Activated T-helper 1 cell treated with anti-CD3 and anti-CD28 coated beads, Interleukin-12 subunit alpha, Interleukin-12 subunit beta, Interleukin-2, Interleukin-4 antibody, amounts not matched to agents 30 ng/mL and 10 ng/mL and 1 ng/mL, durations not matched to agents 14 hours and 24 hours and 36 hours (primary cell): ENCODE measurements at regions of chr15 and their contacts with region 1.

Region 1: DNA sequence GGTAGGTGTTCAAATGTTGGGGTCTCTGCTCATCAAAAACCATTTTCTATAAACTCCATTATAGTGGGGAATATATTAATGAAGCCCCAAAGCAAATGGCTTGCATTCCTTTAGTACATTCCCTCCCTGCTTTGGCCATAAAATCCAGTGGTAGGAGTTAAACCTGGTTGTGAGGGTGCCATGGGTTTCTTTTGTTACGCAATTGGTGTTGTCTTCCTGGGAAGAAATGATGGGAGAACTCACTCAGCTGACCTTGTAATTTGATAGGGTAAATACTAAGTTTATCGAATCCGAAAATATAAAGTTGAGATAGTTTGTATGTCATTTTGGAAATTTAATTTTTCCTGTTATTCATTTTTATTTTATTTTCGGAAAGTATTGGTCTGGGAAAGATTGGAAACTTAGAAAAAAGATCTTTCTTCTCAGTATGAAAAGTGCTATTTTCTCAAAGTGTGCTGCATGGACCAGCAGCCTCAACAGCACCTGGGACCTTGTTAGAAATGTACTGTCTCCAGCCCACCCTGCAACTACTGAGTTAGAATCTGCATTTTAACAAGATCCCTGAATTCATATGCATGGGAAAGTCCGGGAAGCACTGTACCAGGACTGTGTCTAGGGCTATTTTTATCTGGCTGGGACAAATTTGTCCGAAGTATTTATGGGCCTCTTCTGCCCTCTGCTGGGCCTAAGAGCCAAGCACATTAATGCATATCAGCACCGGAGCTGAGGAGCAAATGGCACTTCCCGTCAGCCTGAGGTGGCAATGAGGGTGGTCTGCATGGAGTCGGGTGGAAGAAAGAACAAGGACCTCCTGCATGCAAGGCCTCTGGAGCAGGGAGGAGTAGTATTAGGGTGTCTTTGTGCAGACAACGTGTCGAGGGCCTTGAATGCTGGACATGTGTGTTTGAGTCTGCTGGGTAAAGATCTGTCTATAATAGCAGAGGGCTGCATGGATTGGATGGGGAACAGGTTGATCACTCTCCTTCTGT is 54.7 kb downstream of the FAM81A start:
- DNase-seq: peak; percentile 25
- H3K4me3 Mint-ChIP-seq: no peak overlapping the region
- H3K27ac Mint-ChIP-seq: no peak overlapping the region
- H3K4me1 Mint-ChIP-seq: no peaks in the 10 kb centered on the region
- H3K27me3 Mint-ChIP-seq: peaks cover 32% of the 10 kb centered on the region

Region 2: GRCh38 chr15:58957101-58957973 is 535.3 kb before region 1 on chr15:
- intact Hi-C with region 1: loop called (anchors 1 kb)
- DNase-seq: peak; percentile 45
- H3K4me3 Mint-ChIP-seq: no peak overlapping the region
- H3K27ac Mint-ChIP-seq: no peak overlapping the region
- H3K4me1 Mint-ChIP-seq: peaks cover 17% of the 10 kb centered on the region
- H3K27me3 Mint-ChIP-seq: peaks cover 11% of the 10 kb centered on the region

Region 3: GRCh38 chr15:59174835-59175831 is 317.6 kb before region 1 on chr15:
- intact Hi-C with region 1: loop called (anchors 1 kb)
- DNase-seq: peak; percentile 12
- H3K4me3 Mint-ChIP-seq: no peak overlapping the region
- H3K27ac Mint-ChIP-seq: peak overlapping the region; percentile 41
- H3K4me1 Mint-ChIP-seq: peaks cover 23% of the 10 kb centered on the region
- H3K27me3 Mint-ChIP-seq: no peaks in the 10 kb centered on the region

Region 4: DNA sequence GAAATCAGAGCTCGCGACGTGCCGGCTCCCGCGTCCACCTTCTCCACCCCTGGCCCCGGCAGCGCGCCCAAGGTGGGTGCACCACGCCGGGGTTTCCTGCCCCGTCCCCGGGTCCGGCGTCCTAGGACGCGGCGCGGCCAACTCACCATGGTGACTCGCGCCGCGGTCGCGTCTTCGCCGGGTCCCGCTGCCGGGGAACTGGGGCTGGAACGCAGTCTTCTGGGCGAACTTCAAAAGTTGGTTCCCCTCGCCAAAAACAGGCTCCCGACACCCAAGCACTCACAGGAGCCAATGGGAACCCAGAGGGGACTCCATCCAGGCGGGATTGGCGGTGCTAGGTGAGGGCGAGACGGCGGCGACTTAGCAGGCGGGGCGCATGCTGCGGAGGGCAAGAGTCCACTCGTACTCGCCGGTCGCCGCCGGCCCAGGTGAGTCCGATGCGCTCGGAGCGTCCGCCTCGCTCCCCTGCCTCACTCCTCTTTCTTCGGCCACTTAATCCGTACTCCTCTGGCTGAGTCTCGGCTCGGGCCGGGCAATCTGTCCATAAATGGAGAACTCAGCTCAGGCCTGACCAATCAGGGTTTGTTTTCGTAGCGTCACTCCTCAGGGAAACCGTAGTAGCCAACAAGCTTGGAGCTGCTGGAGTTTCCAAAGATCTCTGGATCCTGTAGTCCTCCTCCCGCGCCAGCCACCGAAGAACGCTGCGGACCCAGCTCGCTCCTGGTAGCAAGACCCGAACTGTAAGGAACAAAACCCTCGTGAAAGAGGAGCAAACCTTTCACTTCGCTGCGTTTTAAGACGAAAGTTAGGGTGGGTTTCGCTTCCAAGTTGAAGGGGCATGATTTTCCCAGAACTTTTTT is 120.1 kb before region 1 on chr15 and contains the start of gene MYO1E:
- intact Hi-C with region 1: loop called (anchors 5 kb)
- DNase-seq: peak; percentile 34
- H3K4me3 Mint-ChIP-seq: peak within 1 kb of the TSS; percentile 96
- H3K27ac Mint-ChIP-seq: peak within 1 kb of the TSS; percentile 79
- H3K4me1 Mint-ChIP-seq: peaks cover 42% of the 10 kb centered on the region
- H3K27me3 Mint-ChIP-seq: peaks cover 31% of the 10 kb centered on the region
- total RNA-seq, gene MYO1E: 33.3 and 33.6 TPM in 2 replicates

Region 5: GRCh38 chr15:59473226-59473625 is 19.5 kb before region 1 on chr15:
- intact Hi-C with region 1: no loop called
- DNase-seq: no peak
- H3K4me3 Mint-ChIP-seq: no peak overlapping the region
- H3K27ac Mint-ChIP-seq: no peak overlapping the region
- H3K4me1 Mint-ChIP-seq: no peaks in the 10 kb centered on the region
- H3K27me3 Mint-ChIP-seq: peaks cover 43% of the 10 kb centered on the region

Region 6: DNA sequence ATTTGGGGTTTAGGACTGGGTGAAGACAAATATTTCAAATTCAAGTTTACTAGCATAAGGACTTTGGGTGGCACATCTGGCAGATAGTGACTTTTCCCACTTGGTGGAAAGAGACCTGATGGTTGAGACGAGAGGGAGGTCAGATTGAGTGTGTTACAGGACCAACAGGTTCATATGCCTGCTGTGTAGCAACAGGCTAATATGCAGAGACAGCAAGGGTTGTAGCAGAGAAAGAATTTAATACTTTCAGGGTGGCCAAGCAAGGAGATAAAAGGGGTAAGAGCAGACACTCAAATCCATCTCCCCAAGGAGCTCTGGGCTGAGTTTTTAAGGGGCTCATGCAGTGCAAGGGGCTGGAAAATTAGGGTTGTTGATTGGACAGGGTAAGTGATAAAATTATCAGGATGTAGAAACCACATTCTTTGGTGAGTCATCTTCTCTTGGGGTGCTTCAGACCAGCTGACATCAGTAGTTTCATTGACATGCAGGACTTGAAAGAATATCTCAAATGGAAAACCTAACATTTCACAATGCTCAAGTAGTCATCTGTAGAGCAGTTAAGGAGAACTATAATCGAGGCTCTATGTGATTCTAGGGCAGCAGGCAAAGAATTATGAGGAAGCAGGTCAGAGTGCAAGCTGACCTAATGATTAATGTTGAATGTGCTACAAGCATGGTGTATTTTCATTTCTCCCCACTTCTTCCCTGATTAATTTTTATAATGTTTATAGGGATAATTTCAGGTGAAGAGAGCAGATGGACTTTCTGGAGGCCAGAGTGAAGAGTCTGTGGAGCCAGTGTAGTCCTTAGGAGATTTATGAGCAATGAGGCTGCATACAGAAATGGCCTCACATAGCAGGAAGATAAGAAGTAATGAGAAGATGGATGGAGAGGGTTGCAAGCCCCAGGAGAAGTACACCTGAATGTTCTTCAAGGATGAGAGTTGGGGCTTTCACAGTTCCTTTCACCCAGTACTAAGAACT is 525.1 kb after region 1 on chr15:
- intact Hi-C with region 1: no loop called
- DNase-seq: no peak
- H3K4me3 Mint-ChIP-seq: peak overlapping the region; percentile 4
- H3K27ac Mint-ChIP-seq: peak overlapping the region; percentile 30
- H3K4me1 Mint-ChIP-seq: peaks cover 19% of the 10 kb centered on the region
- H3K27me3 Mint-ChIP-seq: peaks cover 14% of the 10 kb centered on the region